ENCODE measurements at regions of chr11 and their contacts with region 1.

Region 1: GRCh38 chr11:16494918-16495691 is 138.8 kb upstream of the SOX6 start:
- DNase-seq: no peak
- H3K4me3 ChIP-seq: no peak overlapping the region
- H3K27me3 ChIP-seq: no peaks in the 10 kb centered on the region
- CTCF ChIP-seq: no peak

Region 2: GRCh38 chr11:16095756-16096155 is 399.3 kb before region 1 on chr11:
- CTCF ChIA-PET with region 1: no interaction called
- POLR2A ChIA-PET with region 1: interaction called, 16 read pairs
- DNase-seq: no peak
- H3K4me3 ChIP-seq: no peak overlapping the region
- H3K27me3 ChIP-seq: no peaks in the 10 kb centered on the region
- CTCF ChIP-seq: no peak

Region 3: GRCh38 chr11:16440136-16440535 is 55.0 kb before region 1 on chr11:
- CTCF ChIA-PET with region 1: no interaction called
- POLR2A ChIA-PET with region 1: no interaction called
- DNase-seq: no peak
- H3K4me3 ChIP-seq: no peak overlapping the region
- H3K27me3 ChIP-seq: no peaks in the 10 kb centered on the region
- CTCF ChIP-seq: no peak

Measured in BJ (cell line).